Right cardiac atrium (tissue), 5 donors: ENCODE measurements at regions of chr1 and their contacts with region 1.

Region 1: GRCh38 chr1:152189657-152190442 is 30.8 kb upstream of the RPTN start:
- DNase-seq: peak; percentile 65 to 85 (median 75)
- ATAC-seq: peak; percentile 73 to 77
- H3K4me3 ChIP-seq: peak overlapping the region; percentile 56
- H3K27ac ChIP-seq: no peak overlapping the region
- H3K4me1 ChIP-seq: no peaks in the 10 kb centered on the region
- H3K27me3 ChIP-seq: no peaks in the 10 kb centered on the region

Region 2: GRCh38 chr1:152052606-152053005 is 137.2 kb before region 1 on chr1:
- intact Hi-C with region 1: loop called in 3 of 4 experiments (anchors 2 to 5 kb)
- DNase-seq: peak; percentile 86 to 93 (median 90)
- ATAC-seq: peak; percentile 46 to 49
- H3K4me3 ChIP-seq: no peak overlapping the region
- H3K27ac ChIP-seq: no peak overlapping the region
- H3K4me1 ChIP-seq: peaks cover 1% of the 10 kb centered on the region
- H3K27me3 ChIP-seq: no peaks in the 10 kb centered on the region

Region 3: DNA sequence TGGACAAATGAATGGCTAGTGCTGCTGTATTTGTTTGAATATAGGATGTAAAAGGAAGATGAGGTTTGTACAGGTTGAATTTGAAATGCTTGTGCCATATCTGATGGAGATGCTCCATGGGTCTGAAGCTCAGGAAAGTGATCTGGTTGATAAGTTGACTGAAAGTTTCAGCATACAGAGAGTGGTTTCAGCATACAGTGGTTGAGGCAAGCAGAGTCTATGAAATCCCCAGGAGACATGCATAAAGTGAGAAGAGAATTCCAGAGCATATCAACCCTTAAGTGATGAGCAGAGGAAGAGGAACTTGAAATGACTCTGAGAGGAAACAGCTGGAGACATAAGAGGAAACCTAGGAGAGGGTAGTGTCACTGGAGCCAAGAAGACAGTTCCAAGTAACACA is 122.7 kb before region 1 on chr1:
- intact Hi-C with region 1: no loop called
- DNase-seq: no peak
- ATAC-seq: no peak
- H3K4me3 ChIP-seq: no peak overlapping the region
- H3K27ac ChIP-seq: no peak overlapping the region
- H3K4me1 ChIP-seq: no peaks in the 10 kb centered on the region
- H3K27me3 ChIP-seq: peaks cover 4% of the 10 kb centered on the region

Region 4: DNA sequence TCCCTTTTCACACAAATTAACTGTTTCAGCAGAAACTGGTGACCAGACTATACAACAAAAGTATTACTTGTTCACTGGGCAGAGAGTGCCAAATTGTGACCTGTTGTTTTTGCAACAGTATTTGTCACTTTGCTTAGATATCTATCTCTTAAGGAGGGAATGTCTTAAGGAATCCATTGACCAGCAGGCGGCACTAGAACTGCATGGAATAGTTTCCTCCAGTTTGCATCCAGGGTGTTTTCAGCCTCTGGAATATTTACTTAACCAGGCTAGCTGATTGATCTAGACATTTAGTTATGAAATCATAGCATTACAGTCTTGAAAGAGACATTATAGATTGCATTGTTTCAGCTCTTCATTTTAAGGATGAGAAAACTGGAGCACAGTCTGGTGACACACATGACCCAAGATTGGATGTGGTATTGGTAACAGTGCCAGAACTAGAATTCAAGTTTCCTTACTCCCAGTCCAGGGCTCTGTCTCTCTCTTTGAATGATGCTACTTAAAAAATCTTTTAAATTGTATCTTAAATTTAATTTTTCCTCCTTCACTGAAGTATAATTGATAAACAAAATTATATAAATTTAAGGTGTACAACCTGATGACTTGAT is 47.8 kb before region 1 on chr1:
- intact Hi-C with region 1: loop called in 1 of 4 experiments (anchors 5 kb)
- DNase-seq: peak; percentile 44 to 72 (median 48)
- ATAC-seq: peak; percentile 51 to 53
- H3K4me3 ChIP-seq: no peak overlapping the region
- H3K27ac ChIP-seq: no peak overlapping the region
- H3K4me1 ChIP-seq: no peaks in the 10 kb centered on the region
- H3K27me3 ChIP-seq: peaks cover 2% of the 10 kb centered on the region

Region 5: GRCh38 chr1:152440635-152441471 is 251.0 kb after region 1 on chr1:
- intact Hi-C with region 1: loop called in 3 of 4 experiments (anchors 2 to 5 kb)
- DNase-seq: peak; percentile 71 to 87 (median 79)
- ATAC-seq: peak; percentile 66 to 86
- H3K4me3 ChIP-seq: no peak overlapping the region
- H3K27ac ChIP-seq: no peak overlapping the region
- H3K4me1 ChIP-seq: no peaks in the 10 kb centered on the region
- H3K27me3 ChIP-seq: no peaks in the 10 kb centered on the region

Region 6: GRCh38 chr1:152459596-152460528 is 270.0 kb after region 1 on chr1:
- intact Hi-C with region 1: loop called in 3 of 4 experiments (anchors 5 kb)
- DNase-seq: peak; percentile 70 to 86 (median 85)
- ATAC-seq: peak; percentile 68 to 81
- H3K4me3 ChIP-seq: no peak overlapping the region
- H3K27ac ChIP-seq: no peak overlapping the region
- H3K4me1 ChIP-seq: no peaks in the 10 kb centered on the region
- H3K27me3 ChIP-seq: no peaks in the 10 kb centered on the region